ENCODE measurements at regions of chr11 and their contacts with region 1.

Region 1: GRCh38 chr11:118530408-118531339 is at the start of gene TMEM25:
- DNase-seq: peak; percentile 32
- ATAC-seq: peak; percentile 76
- H3K4me3 ChIP-seq: peak within 1 kb of the TSS; percentile 70 to 97 (median 73)
- H3K27ac ChIP-seq: peak within 1 kb of the TSS; percentile 64
- H3K4me1 ChIP-seq: peaks cover 66% of the 10 kb centered on the region
- H3K27me3 ChIP-seq: no peaks in the 10 kb centered on the region; a peak in 1 of 5 replicates
- CTCF ChIP-seq: no peak
- EP300 ChIP-seq: no peak
- POLR2A ChIP-seq: peak in 1 of 2 experiments; percentile 63; a peak in 3 of 4 replicates
- RAD21 ChIP-seq: no peak
- total RNA-seq, gene TMEM25: 4.5 and 7.5 TPM in 2 replicates

Region 2: GRCh38 chr11:118476676-118477075 is 54.0 kb before region 1 on chr11:
- CTCF ChIA-PET with region 1: no interaction called
- POLR2A ChIA-PET with region 1: no interaction called
- in situ Hi-C with region 1: no loop called
- intact Hi-C with region 1: no loop called
- DNase-seq: no peak
- ATAC-seq: no peak
- H3K4me3 ChIP-seq: no peak overlapping the region
- H3K27ac ChIP-seq: no peak overlapping the region
- H3K4me1 ChIP-seq: no peaks in the 10 kb centered on the region
- H3K27me3 ChIP-seq: no peaks in the 10 kb centered on the region
- CTCF ChIP-seq: no peak
- EP300 ChIP-seq: no peak
- POLR2A ChIP-seq: no peak
- RAD21 ChIP-seq: no peak

Region 3: GRCh38 chr11:118565051-118565450 is 34.4 kb after region 1 on chr11:
- CTCF ChIA-PET with region 1: interaction called, 6 read pairs
- POLR2A ChIA-PET with region 1: interaction called, 3 read pairs
- in situ Hi-C with region 1: loop called (anchors 5 kb)
- intact Hi-C with region 1: no loop called
- DNase-seq: no peak
- ATAC-seq: no peak
- H3K4me3 ChIP-seq: no peak overlapping the region
- H3K27ac ChIP-seq: no peak overlapping the region
- H3K4me1 ChIP-seq: peaks cover 22% of the 10 kb centered on the region
- H3K27me3 ChIP-seq: no peaks in the 10 kb centered on the region; a peak in 1 of 5 replicates
- CTCF ChIP-seq: no peak
- EP300 ChIP-seq: no peak
- POLR2A ChIP-seq: no peak
- RAD21 ChIP-seq: no peak